ENCODE measurements at regions of chr5 and their contacts with region 1.

Region 1: DNA sequence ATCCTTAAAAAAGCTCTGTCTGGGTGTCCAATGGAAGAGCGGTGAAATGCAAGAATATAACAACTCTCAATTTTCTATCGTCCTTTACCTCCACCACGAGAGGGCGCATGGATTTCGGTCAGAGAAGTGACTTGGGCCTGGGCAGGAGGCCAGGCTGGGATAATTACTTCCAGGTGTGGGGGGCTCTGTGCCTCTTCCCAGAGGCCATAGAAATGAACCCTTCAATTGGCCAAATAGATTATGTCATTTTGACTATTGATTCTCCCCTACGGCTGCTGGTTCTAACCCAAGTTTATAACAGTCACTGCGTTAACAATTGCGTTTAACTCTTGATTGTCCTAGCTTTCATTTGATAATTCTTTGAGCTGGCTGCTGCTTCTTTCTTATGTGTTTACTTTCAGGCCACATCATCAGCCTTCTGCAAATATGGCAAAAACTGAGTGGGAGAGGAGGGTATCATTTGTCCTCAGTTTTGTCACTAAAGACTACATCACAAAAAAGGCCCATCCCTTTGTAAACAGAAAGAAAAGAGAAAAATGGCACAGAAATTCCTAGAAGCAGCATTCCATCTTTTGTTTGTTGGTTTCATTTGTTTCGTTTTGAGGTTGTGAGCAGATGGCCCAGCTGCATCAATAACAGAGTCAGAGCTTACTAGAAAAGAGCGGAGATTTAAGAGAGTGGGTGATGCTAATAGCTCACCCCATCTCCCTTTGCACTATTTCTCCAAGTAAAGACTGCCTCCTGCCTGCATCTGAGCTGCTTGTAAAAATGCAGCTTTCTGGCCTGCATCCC is 45.4 kb upstream of the ZFR start:
- DNase-seq: peak; percentile 78

Region 2: GRCh38 chr5:32613050-32613672 is 123.2 kb after region 1 on chr5:
- CTCF ChIA-PET with region 1: interaction called, 15 read pairs
- POLR2A ChIA-PET with region 1: no interaction called
- DNase-seq: peak; percentile 82